IMR-90 (cell line): ENCODE measurements at regions of chr10 and their contacts with region 1.

Region 1: DNA sequence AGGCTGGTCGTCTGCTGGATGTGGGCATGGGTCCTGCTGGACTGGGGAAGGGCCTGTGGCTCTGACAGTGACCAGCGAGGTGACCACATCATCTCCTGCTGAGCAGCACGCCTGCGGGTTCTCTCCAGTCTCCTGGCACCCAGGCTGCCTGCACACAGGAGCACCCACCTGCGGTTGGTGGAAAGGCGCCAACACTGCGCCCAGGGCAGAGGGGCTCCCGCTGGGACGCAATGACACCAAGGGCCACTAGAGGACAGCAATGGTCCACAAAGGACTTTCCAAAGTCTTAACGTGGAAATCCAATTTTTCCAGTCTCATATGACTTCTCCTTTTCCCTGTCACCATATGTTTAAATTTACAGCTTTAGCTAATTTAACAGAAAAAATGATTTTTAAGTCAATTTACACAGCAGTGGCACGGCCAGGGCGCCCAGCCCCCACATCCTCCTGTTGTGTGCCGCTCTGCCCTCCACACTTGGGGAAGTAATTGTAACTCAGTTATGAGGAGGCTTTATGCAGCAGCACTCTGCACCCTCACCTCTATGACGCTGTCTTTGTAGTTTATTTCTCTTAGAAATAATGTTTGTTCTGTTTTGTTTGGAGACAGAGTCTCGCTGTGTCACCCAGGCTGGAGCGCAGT is 38.1 kb downstream of the CFAP46 start:
- DNase-seq: peak; percentile 24
- ATAC-seq: peak; percentile 76
- H3K4me3 ChIP-seq: no peak overlapping the region
- H3K27ac ChIP-seq: no peak overlapping the region
- H3K4me1 ChIP-seq: no peaks in the 10 kb centered on the region
- H3K27me3 ChIP-seq: peaks cover 11% of the 10 kb centered on the region
- CTCF ChIP-seq: peak; percentile 71
- POLR2A ChIP-seq: no peak
- RAD21 ChIP-seq: peak; percentile 76

Region 2: DNA sequence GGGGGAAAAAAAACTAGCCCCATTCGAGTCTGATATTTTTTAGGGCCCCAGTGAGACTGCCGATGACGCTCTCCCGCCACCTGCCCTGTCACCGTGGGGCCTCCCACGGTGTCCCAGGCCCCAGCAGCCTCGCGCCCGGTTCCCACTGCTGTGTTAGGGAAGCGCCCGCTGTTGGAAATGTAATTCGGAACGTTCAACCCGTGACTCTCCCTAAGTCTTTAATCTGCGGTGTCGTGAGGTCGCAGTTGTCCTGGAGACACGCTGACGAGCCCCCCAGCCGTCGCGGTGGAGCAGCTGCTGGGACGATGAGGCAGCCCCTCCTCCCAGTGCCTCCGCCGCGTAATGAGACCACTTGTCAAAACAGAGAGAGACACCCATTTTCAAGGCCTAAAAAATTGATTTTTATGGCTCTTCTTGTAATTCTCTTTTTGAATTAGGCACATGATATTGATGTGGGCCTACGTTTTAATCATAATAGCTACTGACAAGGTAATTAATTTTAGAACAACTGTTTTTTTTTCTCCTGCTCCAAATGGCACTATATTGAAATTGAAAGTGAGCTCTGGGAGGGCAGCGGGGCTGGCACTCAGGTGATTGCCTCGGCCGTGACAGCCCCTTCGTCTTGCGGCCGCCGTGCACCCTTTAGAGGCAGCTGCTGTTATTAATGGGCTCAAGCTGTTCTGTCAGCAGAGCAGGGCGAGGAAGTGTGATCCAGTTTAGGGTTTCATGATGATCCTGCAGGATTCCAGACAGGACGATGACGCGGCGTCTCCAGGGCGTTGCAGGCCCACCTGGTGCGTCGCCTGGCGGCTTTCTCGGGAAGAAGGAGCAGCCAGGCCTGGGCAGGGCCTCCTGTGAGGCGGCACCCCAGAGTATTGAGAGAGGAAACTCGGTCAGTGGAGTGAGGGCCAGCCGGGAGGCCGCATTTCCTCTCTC is 181.6 kb before region 1 on chr10:
- CTCF ChIA-PET with region 1: no interaction called
- POLR2A ChIA-PET with region 1: no interaction called
- dilution Hi-C with region 1: no loop called
- in situ Hi-C with region 1: no loop called
- intact Hi-C with region 1: no loop called
- DNase-seq: no peak
- ATAC-seq: no peak
- H3K4me3 ChIP-seq: no peak overlapping the region
- H3K27ac ChIP-seq: no peak overlapping the region
- H3K4me1 ChIP-seq: peaks cover 7% of the 10 kb centered on the region
- H3K27me3 ChIP-seq: no peaks in the 10 kb centered on the region
- CTCF ChIP-seq: no peak
- POLR2A ChIP-seq: no peak
- RAD21 ChIP-seq: no peak

Region 3: GRCh38 chr10:132848291-132848701 is 56.0 kb before region 1 on chr10:
- CTCF ChIA-PET with region 1: no interaction called
- POLR2A ChIA-PET with region 1: no interaction called
- dilution Hi-C with region 1: no loop called
- in situ Hi-C with region 1: no loop called
- intact Hi-C with region 1: no loop called
- DNase-seq: no peak
- ATAC-seq: peak; percentile 53
- H3K4me3 ChIP-seq: no peak overlapping the region
- H3K27ac ChIP-seq: no peak overlapping the region
- H3K4me1 ChIP-seq: no peaks in the 10 kb centered on the region
- H3K27me3 ChIP-seq: peaks cover 33% of the 10 kb centered on the region
- CTCF ChIP-seq: no peak
- POLR2A ChIP-seq: no peak
- RAD21 ChIP-seq: no peak

Region 4: GRCh38 chr10:133124357-133125211 is 220.3 kb after region 1 on chr10:
- CTCF ChIA-PET with region 1: no interaction called
- POLR2A ChIA-PET with region 1: no interaction called
- dilution Hi-C with region 1: no loop called
- in situ Hi-C with region 1: no loop called
- intact Hi-C with region 1: loop called (anchors 1 kb)
- DNase-seq: no peak
- ATAC-seq: peak; percentile 92
- H3K4me3 ChIP-seq: no peak overlapping the region
- H3K27ac ChIP-seq: no peak overlapping the region
- H3K4me1 ChIP-seq: no peaks in the 10 kb centered on the region
- H3K27me3 ChIP-seq: no peaks in the 10 kb centered on the region; the same call in 1 of the 2 replicates
- CTCF ChIP-seq: peak; percentile 45
- POLR2A ChIP-seq: no peak
- RAD21 ChIP-seq: peak; percentile 47